ENCODE measurements at regions of chr6 and their contacts with region 1.

Region 1: DNA sequence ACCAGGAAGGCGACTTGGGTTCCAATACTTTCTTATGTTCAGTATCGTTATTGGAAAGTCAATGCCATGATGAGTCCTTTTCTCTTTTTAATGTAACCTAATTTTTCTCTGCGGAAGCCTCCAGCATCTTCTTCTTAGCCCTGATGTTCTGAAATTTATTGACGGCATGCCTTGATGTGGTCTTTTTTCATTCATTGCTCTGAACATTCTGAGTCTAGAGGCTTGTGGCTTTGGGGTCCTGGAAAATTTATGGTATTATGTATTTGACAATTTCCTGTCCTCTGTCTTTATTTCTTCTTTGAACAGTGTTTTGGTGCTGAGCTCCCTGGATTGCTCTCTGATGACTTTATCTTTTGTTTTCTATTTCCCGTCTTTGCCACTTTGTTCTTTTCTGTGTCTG is 28.7 kb upstream of the MAS1 start:
- DNase-seq: no peak
- H3K4me3 ChIP-seq: no peak overlapping the region
- H3K4me3 Mint-ChIP-seq: no peak overlapping the region
- H3K27ac Mint-ChIP-seq: no peak overlapping the region
- H3K4me1 ChIP-seq: no peaks in the 10 kb centered on the region
- H3K4me1 Mint-ChIP-seq: no peaks in the 10 kb centered on the region
- H3K27me3 ChIP-seq: no peaks in the 10 kb centered on the region
- H3K27me3 Mint-ChIP-seq: peaks cover 13% of the 10 kb centered on the region
- CTCF ChIP-seq: no peak

Region 2: DNA sequence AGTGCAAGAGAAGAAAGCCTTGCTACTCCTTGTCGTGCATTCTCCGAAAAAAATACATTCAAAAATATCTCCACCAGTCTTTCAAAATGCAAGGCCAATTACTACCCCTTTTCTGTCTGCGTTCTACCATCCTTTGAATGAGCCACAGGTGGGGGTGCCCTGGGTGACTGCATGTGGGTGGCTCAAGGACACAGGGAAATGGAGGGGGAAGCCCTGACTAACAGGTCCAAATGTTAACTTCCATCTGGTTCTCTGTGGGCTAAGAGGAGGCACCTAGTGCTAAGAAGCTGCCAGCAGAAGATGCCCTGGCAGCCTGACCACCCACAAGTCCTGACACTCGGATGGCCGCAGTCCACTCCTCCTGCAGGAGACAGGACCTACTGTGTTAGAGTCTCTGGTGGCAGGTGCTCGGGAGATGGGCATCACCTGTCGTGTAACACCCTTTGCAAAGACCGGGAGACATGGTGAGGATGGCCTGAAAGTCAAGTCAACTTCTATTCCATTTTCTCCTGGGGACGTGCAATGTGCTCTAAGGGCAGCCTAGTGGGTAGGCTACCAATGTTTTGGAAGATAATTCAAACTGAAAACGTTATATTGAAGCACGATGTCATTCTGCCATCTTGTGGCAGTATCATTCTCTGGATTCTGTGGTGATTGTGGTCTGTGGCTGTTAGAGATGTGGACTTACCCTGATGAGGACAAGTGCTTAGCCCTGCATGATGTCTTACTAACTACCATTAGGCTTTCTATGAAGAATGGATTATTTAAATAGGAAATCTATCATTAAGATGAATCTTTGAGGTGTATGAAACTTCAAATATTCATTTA is 79.4 kb after region 1 on chr6:
- CTCF ChIA-PET with region 1: interaction called, 11 read pairs
- POLR2A ChIA-PET with region 1: no interaction called
- intact Hi-C with region 1: loop called (anchors 1 kb)
- DNase-seq: peak in 1 of 2 experiments; percentile 27
- H3K4me3 ChIP-seq: no peak overlapping the region
- H3K4me3 Mint-ChIP-seq: no peak overlapping the region
- H3K27ac Mint-ChIP-seq: no peak overlapping the region
- H3K4me1 ChIP-seq: no peaks in the 10 kb centered on the region
- H3K4me1 Mint-ChIP-seq: peaks cover 6% of the 10 kb centered on the region
- H3K27me3 ChIP-seq: no peaks in the 10 kb centered on the region
- H3K27me3 Mint-ChIP-seq: peaks cover 12% of the 10 kb centered on the region
- CTCF ChIP-seq: peak; percentile 35 to 39

Region 3: GRCh38 chr6:160005861-160006540 is 143.9 kb after region 1 on chr6:
- CTCF ChIA-PET with region 1: no interaction called
- POLR2A ChIA-PET with region 1: no interaction called
- intact Hi-C with region 1: no loop called
- DNase-seq: no peak
- H3K4me3 ChIP-seq: no peak overlapping the region
- H3K4me3 Mint-ChIP-seq: no peak overlapping the region
- H3K27ac Mint-ChIP-seq: no peak overlapping the region
- H3K4me1 ChIP-seq: 0 out of 2 replicates have a peak, but pooled peaks cover 4% of the 10 kb centered on the region
- H3K4me1 Mint-ChIP-seq: no peaks in the 10 kb centered on the region
- H3K27me3 ChIP-seq: no peaks in the 10 kb centered on the region
- H3K27me3 Mint-ChIP-seq: no peaks in the 10 kb centered on the region
- CTCF ChIP-seq: no peak

Region 4: GRCh38 chr6:160041608-160042007 is 179.5 kb after region 1 on chr6:
- CTCF ChIA-PET with region 1: no interaction called
- POLR2A ChIA-PET with region 1: no interaction called
- intact Hi-C with region 1: loop called (anchors 5 kb)
- DNase-seq: no peak
- H3K4me3 ChIP-seq: no peak overlapping the region
- H3K4me3 Mint-ChIP-seq: no peak overlapping the region
- H3K27ac Mint-ChIP-seq: no peak overlapping the region
- H3K4me1 ChIP-seq: peaks cover 4% of the 10 kb centered on the region; the same call in 1 of the 2 replicates
- H3K4me1 Mint-ChIP-seq: peaks cover 6% of the 10 kb centered on the region
- H3K27me3 ChIP-seq: no peaks in the 10 kb centered on the region
- H3K27me3 Mint-ChIP-seq: no peaks in the 10 kb centered on the region
- CTCF ChIP-seq: no peak

Region 5: GRCh38 chr6:160102956-160103824 is 241.1 kb after region 1 on chr6:
- CTCF ChIA-PET with region 1: no interaction called
- POLR2A ChIA-PET with region 1: no interaction called
- intact Hi-C with region 1: loop called (anchors 1 kb)
- DNase-seq: peak in 1 of 2 experiments; percentile 28
- H3K4me3 ChIP-seq: no peak overlapping the region
- H3K4me3 Mint-ChIP-seq: no peak overlapping the region
- H3K27ac Mint-ChIP-seq: no peak overlapping the region
- H3K4me1 ChIP-seq: no peaks in the 10 kb centered on the region
- H3K4me1 Mint-ChIP-seq: no peaks in the 10 kb centered on the region
- H3K27me3 ChIP-seq: no peaks in the 10 kb centered on the region
- H3K27me3 Mint-ChIP-seq: no peaks in the 10 kb centered on the region
- CTCF ChIP-seq: peak; percentile 12 to 36